ENCODE measurements at regions of chr5 and their contacts with region 1.

Region 1: GRCh38 chr5:56200856-56201666 is 32.1 kb downstream of the ANKRD55 start:
- DNase-seq: no peak
- ATAC-seq: peak; percentile 98

Region 2: DNA sequence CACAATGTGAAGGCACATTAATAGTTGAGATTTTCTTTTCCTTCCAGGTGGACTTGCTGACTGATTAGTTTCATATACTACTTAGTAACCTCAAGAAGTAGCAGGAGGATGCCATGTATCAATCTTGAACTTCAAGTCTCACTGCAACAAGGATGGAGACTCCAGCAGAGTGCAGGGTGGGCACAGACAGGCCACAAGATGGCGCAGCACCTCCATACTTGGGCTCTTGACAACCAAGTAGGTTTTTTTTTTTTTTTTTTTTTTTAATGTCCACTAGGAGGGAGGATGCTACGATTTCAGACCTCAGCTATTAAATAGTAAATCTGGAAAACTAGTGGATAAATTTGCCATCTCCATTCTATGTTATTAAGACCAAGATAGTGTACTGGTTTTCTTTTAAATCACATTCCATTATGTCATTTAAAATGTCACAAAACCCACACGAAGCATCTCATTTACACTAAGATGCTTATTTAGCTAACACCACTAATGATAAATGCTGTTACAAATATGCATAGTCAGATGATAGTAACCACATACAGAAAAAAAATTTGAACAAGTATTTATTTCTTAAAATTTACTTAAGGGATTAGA is 264.9 kb before region 1 on chr5:
- intact Hi-C with region 1: loop called (anchors 5 kb)
- DNase-seq: peak; percentile 88
- ATAC-seq: peak; percentile 85

Region 3: GRCh38 chr5:55982957-55983381 is 218.1 kb before region 1 on chr5:
- intact Hi-C with region 1: loop called (anchors 5 kb)
- DNase-seq: no peak
- ATAC-seq: peak; percentile 55

Region 4: GRCh38 chr5:56827049-56827448 is 626.0 kb after region 1 on chr5:
- intact Hi-C with region 1: no loop called
- DNase-seq: no peak
- ATAC-seq: peak; percentile 41